Heart left ventricle (tissue), 16 donors: ENCODE measurements at regions of chr11 and their contacts with region 1.

Region 1: DNA sequence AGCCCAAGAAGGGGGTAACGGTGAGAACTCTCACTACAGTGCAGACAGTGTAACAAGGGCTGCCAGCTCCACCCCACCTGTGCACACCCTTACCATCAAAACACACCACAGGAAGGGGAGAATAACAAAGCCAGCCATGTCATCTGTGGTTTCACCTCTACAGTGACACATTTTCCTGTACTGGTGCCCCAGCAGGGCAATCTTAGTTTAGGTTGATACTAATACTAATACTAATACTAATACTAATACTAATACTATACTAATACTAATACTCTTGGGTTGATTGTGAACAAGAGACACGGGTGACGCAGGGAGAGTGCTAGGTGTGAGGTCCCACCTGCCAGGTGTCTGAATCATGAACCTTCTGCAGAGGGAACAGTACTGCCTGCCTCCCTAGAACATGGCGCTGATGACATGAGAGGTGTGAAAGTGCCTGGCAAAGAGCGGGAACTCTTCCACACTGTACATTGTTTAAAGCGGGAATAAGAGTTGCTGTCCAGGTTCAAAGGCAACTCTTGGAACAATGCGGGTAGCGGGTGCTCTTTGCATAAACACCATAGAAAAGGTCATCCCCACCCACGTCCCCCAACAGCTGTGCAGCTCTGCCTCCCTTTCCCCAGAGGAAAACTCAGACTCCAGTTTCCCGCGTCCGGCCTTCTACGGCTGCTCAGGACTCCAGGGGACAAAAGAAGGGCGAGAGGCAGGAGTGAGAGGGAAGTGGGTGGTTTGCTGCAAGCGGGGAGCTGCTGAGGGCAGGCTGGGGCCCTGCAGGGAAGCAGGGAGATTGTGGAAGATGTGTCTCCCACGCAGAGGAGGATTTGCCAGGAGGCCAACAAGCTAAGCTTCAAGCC is 25.0 kb upstream of the TMPRSS4 start:
- DNase-seq: no peak
- ATAC-seq: peak; percentile 21 to 40 (median 30)
- H3K4me3 ChIP-seq: no peak overlapping the region
- H3K27ac ChIP-seq: peak overlapping the region in 1 of 12 donors; percentile 64
- H3K4me1 ChIP-seq: peaks cover 0 to 20% (median 0%) of the 10 kb centered on the region in 12 donors
- H3K27me3 ChIP-seq: no peaks in the 10 kb centered on the region
- CTCF ChIP-seq: no peak
- POLR2A ChIP-seq: no peak

Region 2: DNA sequence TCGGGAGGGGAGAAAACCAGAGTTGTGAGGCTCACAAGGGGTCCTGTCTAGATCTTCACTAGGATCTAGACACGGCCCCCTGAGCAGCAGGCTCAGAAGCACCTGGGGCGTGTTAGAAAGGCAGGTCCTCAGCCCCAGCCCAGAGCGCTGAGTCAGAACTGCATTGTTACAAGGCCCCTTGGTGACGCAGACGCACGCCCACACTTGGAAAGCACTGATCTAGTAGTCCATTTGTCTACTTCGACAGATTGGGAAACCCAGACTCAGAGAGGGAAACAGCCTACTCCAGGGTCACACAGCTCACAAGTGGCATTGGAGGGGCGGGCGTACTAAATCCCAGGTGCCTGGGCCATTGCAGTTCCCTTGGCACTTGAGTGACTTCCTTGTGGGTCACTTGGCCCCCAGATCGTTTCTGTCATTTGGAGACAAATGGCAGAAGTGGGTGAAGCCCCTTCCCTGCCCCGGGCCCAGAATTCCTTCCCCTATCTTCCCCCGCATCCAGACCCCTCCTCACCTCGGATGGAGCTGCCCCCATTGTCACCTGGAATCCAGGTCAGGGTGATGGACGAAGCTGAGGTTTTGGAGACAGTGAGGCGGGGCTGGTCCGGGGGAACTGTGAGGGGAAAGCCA is 613.4 kb before region 1 on chr11:
- intact Hi-C with region 1: loop called in 2 of 10 experiments (anchors 5 to 10 kb)
- DNase-seq: no peak
- ATAC-seq: no peak
- H3K4me3 ChIP-seq: no peak overlapping the region
- H3K27ac ChIP-seq: no peak overlapping the region
- H3K4me1 ChIP-seq: peaks cover 0 to 3% (median 0%) of the 10 kb centered on the region in 12 donors
- H3K27me3 ChIP-seq: peaks cover 0 to 9% (median 0%) of the 10 kb centered on the region in 9 donors
- CTCF ChIP-seq: no peak
- POLR2A ChIP-seq: no peak

Region 3: GRCh38 chr11:117743123-117743815 is 308.6 kb before region 1 on chr11:
- intact Hi-C with region 1: no loop called
- DNase-seq: no peak
- ATAC-seq: no peak
- H3K4me3 ChIP-seq: no peak overlapping the region
- H3K27ac ChIP-seq: no peak overlapping the region
- H3K4me1 ChIP-seq: no peaks in the 10 kb centered on the region
- H3K27me3 ChIP-seq: no peaks in the 10 kb centered on the region
- CTCF ChIP-seq: no peak
- POLR2A ChIP-seq: no peak

Region 4: GRCh38 chr11:117807482-117808327 is 244.1 kb before region 1 on chr11:
- intact Hi-C with region 1: loop called in 7 of 10 experiments (anchors 1 to 10 kb)
- DNase-seq: peak; percentile 70 to 89 (median 79)
- ATAC-seq: peak; percentile 31 to 59 (median 45)
- H3K4me3 ChIP-seq: no peak overlapping the region
- H3K27ac ChIP-seq: no peak overlapping the region
- H3K4me1 ChIP-seq: peaks cover 0 to 23% (median 3%) of the 10 kb centered on the region in 12 donors
- H3K27me3 ChIP-seq: peaks cover 0 to 12% (median 0%) of the 10 kb centered on the region in 9 donors
- CTCF ChIP-seq: peak; percentile 84 to 96 (median 89)
- POLR2A ChIP-seq: no peak

Region 5: DNA sequence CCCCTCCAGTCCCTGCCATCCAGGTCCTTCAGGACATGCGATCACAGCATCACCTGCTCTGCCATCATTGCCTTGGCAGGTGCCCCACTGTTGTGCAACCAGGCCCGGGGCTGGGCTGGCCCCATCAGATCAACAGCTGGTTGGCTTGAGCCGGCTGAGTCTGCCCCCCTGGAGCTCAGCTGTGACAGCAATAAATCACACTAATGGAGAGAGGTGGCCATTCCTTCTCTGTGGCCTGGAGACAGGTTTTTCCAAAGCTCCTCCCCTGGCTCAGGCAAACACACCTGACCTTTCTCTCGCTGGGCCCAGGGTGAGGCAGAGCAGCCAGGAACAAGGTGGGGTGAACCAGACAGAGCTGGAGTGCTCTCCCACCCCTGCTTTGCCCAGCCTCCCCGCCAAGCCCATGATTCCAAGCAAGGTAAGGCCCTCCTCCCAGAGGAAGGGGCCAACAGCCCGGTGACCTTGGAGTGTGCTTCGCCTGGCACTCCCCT is 218.4 kb before region 1 on chr11:
- intact Hi-C with region 1: loop called in 1 of 10 experiments (anchors 5 kb)
- DNase-seq: peak in 3 of 5 donors; percentile 7 to 50 (median 20)
- ATAC-seq: peak in 2 of 4 donors; percentile 3 to 14
- H3K4me3 ChIP-seq: no peak overlapping the region
- H3K27ac ChIP-seq: peak overlapping the region in 1 of 12 donors; percentile 36
- H3K4me1 ChIP-seq: peaks cover 0 to 42% (median 21%) of the 10 kb centered on the region in 12 donors
- H3K27me3 ChIP-seq: no peaks in the 10 kb centered on the region
- CTCF ChIP-seq: no peak
- POLR2A ChIP-seq: no peak

Region 6: DNA sequence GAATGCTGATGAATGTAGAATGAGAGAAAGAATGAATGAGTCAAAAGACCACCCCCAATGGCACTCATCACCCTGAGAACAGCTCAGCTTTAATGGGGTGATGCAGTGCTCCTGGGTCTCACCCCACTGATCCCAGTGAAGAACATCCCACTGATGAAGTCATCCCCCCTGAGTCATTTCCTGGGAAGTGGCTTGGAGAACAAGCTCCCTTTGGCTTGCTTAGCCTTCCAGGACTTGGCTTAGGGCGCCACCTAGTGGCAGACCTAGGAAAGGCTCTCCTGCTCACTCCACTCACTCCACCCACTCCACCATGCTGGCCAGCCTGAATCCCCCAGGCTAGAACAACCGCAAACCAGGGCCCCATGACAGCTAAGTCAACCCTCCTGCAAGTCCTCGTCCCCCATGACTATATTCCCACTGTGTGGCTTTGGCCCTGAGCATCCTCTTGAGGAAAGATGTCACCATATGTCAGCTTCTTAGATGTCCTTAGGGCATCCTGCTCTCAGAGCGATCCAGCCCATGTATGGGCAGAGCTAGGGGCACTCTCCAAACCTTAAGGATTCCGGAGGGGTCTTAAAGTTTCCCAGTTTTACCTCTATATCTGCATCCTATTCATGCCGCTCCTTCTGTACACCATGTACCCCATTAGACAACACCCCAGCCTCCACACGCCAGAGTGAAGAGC is 104.9 kb before region 1 on chr11:
- intact Hi-C with region 1: loop called (anchors 2 to 5 kb)
- DNase-seq: peak; percentile 89 to 94 (median 89)
- ATAC-seq: peak; percentile 90 to 96 (median 94)
- H3K4me3 ChIP-seq: no peak overlapping the region
- H3K27ac ChIP-seq: no peak overlapping the region
- H3K4me1 ChIP-seq: peaks cover 0 to 68% (median 7%) of the 10 kb centered on the region in 12 donors
- H3K27me3 ChIP-seq: peaks cover 0 to 5% (median 0%) of the 10 kb centered on the region in 9 donors
- CTCF ChIP-seq: peak; percentile 94 to 99 (median 98)
- POLR2A ChIP-seq: no peak

Region 7: GRCh38 chr11:118002541-118003423 is 49.1 kb before region 1 on chr11:
- intact Hi-C with region 1: loop called in 1 of 10 experiments (anchors 2 kb)
- DNase-seq: peak in 4 of 5 donors; percentile 82 to 86 (median 84)
- ATAC-seq: peak; percentile 74 to 93 (median 86)
- H3K4me3 ChIP-seq: no peak overlapping the region
- H3K27ac ChIP-seq: peak overlapping the region in 9 of 12 donors; percentile 55 to 91 (median 82)
- H3K4me1 ChIP-seq: peaks cover 0 to 100% (median 5%) of the 10 kb centered on the region in 12 donors
- H3K27me3 ChIP-seq: no peaks in the 10 kb centered on the region
- CTCF ChIP-seq: no peak
- POLR2A ChIP-seq: no peak